Left lung (tissue), 14 donors: ENCODE measurements at regions of chr18 and their contacts with region 1.

Region 1: GRCh38 chr18:48445540-48445939 is 36.4 kb upstream of the ZBTB7C start:
- DNase-seq: peak in 2 of 4 donors; percentile 60 to 72
- ATAC-seq: peak; percentile 94
- H3K4me3 ChIP-seq: no peak overlapping the region
- H3K27ac ChIP-seq: no peak overlapping the region
- H3K4me1 ChIP-seq: peaks cover 2 to 3% of the 10 kb centered on the region in 2 donors
- H3K27me3 ChIP-seq: peaks cover 0 to 15% of the 10 kb centered on the region in 2 donors
- CTCF ChIP-seq: peak; percentile 90 to 92

Region 2: DNA sequence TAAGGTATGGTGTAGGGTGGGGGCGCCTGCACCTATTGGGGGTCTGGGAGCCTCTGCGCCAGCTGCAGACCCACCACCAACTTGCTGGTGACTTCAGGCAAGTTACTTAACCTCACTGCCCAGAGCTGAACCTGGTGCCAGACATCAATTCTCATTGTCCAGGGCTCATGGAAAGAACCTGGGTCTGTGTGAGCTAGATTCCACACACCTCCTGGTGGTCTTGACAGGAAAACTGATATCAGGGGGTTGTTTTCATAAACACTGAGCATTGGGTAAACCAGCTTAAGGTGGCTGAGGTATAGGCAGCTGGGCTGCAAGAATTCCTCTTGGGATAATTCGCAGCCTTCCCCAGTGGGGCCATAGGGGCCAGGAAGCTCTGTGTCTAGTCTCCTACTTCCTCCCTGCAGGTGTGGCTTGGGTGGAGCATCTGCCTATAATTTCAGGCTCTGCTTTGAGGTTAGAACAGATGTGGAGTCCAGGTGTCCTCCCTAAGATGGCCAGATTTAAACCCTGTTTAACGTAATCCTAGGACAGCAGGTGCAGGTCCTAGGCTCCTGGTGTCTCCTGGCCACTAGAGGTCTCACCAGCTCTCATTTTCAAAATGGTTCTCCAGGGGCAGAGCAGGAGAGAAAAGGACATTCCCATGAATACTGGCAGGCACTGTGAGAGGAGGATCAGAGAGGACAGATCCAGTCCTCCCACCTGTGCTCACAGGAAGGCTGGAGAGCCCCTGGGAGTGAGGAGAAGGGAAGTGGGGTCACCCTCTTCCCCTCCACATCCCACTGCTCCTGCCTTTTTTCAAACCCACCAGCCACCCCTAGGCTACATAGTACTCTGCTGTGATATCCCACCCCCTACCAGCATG is 414.7 kb before region 1 on chr18:
- intact Hi-C with region 1: loop called in 1 of 2 experiments (anchors 5 kb)
- DNase-seq: peak in 3 of 4 donors; percentile 47 to 71 (median 47)
- ATAC-seq: peak; percentile 79
- H3K4me3 ChIP-seq: no peak overlapping the region
- H3K27ac ChIP-seq: no peak overlapping the region
- H3K4me1 ChIP-seq: peaks cover 5 to 12% of the 10 kb centered on the region in 2 donors
- H3K27me3 ChIP-seq: no peaks in the 10 kb centered on the region
- CTCF ChIP-seq: peak; percentile 59 to 71

Region 3: DNA sequence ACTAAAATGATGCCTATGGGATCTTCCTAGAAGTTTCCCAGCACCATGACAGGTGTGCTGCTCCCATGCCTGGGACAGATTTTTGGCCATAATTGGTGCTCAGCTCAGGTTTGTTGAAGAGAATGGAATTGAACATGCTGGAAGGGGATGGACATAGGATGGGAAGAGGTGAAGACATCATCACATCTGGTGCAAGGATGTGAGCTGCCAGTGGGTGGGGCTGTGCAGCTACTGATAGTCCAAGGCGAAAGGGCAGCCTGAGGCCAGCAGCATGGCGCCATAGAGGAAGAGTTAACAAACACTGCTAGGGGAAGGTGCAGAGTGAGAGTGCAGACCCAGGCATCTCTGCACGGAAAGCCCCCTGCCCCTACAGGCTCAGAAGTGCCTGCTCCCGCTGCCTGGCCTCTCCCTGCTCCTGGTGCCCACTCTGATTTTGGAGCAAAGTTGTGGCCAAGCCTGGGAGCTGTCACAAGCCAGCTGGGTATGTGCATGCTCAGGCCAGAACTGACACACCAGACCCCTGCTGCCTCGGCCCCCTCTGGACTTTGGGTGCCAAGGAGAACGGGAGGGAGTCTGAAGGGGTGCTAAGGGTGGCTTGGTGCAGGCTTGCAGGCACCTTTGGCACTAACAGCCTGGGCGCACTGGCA is 214.9 kb before region 1 on chr18:
- intact Hi-C with region 1: loop called in 1 of 2 experiments (anchors 10 kb)
- DNase-seq: peak in 2 of 4 donors; percentile 51 to 70
- ATAC-seq: peak; percentile 94
- H3K4me3 ChIP-seq: no peak overlapping the region
- H3K27ac ChIP-seq: no peak overlapping the region
- H3K4me1 ChIP-seq: peaks cover 8 to 10% of the 10 kb centered on the region in 2 donors
- H3K27me3 ChIP-seq: no peaks in the 10 kb centered on the region
- CTCF ChIP-seq: peak; percentile 36 to 41

Region 4: DNA sequence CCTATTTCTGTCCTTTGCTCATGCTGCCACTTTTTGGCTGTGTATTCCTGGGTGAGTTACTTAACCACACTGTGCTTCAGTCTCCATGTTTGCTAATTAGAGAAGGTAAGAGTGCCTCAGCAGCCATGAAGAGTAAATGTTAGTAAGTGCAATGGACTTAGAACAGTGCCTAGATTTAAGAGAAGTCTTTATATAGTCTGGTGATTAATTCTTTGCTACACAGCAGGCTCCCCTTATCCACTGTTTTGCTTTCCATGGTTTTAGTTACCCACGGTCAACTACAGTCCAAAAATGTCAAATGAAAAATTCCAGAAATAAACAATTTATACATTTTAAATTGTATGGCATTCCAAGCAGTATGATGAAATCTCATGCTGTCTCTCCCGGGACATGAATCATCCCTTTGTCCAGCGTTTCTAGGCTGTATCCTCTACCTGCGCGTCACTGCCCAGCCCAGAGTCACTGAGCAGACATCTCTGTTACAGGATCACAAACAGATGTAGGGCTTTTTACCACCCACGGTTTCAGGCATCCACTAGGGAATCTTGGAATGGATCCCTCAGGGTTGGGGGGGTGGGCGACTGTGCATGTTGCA is 184.3 kb after region 1 on chr18:
- intact Hi-C with region 1: no loop called
- DNase-seq: peak in 1 of 4 donors; percentile 27
- ATAC-seq: peak; percentile 47
- H3K4me3 ChIP-seq: no peak overlapping the region
- H3K27ac ChIP-seq: no peak overlapping the region
- H3K4me1 ChIP-seq: no peaks in the 10 kb centered on the region
- H3K27me3 ChIP-seq: no peaks in the 10 kb centered on the region
- CTCF ChIP-seq: no peak

Region 5: GRCh38 chr18:48676756-48677403 is 231.3 kb after region 1 on chr18:
- intact Hi-C with region 1: no loop called
- DNase-seq: peak in 3 of 4 donors; percentile 71 to 92 (median 71)
- ATAC-seq: peak; percentile 50
- H3K4me3 ChIP-seq: no peak overlapping the region
- H3K27ac ChIP-seq: peak overlapping the region in 1 of 2 donors; percentile 45
- H3K4me1 ChIP-seq: peaks cover 3 to 67% of the 10 kb centered on the region in 2 donors
- H3K27me3 ChIP-seq: no peaks in the 10 kb centered on the region
- CTCF ChIP-seq: peak; percentile 77 to 81